Activated T-helper 1 cell treated with anti-CD3 and anti-CD28 coated beads, Interleukin-12 subunit alpha, Interleukin-12 subunit beta, Interleukin-2, Interleukin-4 antibody, amounts not matched to agents 30 ng/mL and 10 ng/mL and 1 ng/mL, durations not matched to agents 14 hours and 24 hours and 36 hours (primary cell): ENCODE measurements at regions of chr3 and their contacts with region 1.

Region 1: DNA sequence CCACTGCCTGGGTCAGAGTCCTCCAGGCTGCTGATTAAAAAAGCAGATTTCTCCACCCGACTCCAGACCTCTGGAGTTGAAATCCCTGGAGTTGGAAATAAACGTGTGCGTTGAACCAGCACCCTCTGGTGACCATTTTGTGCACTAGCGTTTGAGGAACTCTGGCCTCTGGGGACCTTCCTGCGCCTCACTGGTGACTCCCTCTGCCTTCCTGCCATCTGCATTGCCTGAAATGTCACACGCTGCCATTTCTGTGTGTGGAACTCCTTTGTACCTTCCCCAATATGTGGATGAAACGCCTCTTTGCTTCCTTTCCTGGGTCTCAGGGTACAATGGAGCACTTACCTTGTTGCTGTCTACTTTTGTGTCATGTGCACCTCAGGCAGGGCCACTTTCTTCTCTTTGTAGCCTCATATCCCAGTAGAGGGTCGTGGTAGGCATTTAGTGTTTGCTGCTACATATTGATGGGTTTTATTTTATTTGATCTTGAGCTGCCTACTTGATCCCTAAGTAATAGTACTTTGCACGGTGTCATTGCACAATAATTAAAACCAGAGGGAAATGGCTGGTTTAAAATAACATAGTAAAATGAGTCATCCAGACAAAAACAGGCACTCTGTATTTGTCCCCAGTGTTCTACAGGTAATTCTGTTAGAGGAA is 56.8 kb downstream of the GPR171 start:
- DNase-seq: peak; percentile 38
- H3K4me3 Mint-ChIP-seq: no peak overlapping the region
- H3K27ac Mint-ChIP-seq: no peak overlapping the region
- H3K4me1 Mint-ChIP-seq: no peaks in the 10 kb centered on the region
- H3K27me3 Mint-ChIP-seq: peaks cover 14% of the 10 kb centered on the region

Region 2: DNA sequence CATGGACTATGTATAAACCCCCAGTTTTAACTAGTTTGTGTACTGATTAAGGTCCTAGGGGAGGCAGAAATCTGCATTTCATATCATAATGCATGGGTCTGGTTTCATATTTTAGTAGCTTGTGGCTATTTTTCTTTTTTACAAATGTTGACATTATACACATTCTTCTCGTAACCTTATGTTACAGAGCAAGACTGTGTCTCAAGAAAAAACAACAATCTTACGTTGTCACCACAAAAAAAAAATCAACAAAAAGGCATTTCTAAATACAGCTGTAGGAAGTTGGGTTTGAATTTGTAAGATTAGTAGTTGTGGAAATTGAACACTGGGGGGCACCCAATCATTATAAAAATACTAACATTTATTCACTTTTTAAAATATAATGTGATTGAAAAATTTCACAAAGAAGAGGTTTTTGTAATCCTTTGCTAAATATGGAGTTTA is 617.8 kb before region 1 on chr3:
- intact Hi-C with region 1: loop called (anchors 2 kb)
- DNase-seq: no peak
- H3K4me3 Mint-ChIP-seq: no peak overlapping the region
- H3K27ac Mint-ChIP-seq: no peak overlapping the region
- H3K4me1 Mint-ChIP-seq: peaks cover 7% of the 10 kb centered on the region
- H3K27me3 Mint-ChIP-seq: peaks cover 17% of the 10 kb centered on the region

Region 3: GRCh38 chr3:150925751-150926201 is 220.4 kb before region 1 on chr3:
- intact Hi-C with region 1: loop called (anchors 1 kb)
- DNase-seq: peak; percentile 27
- H3K4me3 Mint-ChIP-seq: peak overlapping the region; percentile 48
- H3K27ac Mint-ChIP-seq: no peak overlapping the region
- H3K4me1 Mint-ChIP-seq: peaks cover 9% of the 10 kb centered on the region
- H3K27me3 Mint-ChIP-seq: peaks cover 20% of the 10 kb centered on the region

Region 4: GRCh38 chr3:151067158-151067557 is 79.0 kb before region 1 on chr3:
- intact Hi-C with region 1: loop called (anchors 1 kb)
- DNase-seq: no peak
- H3K4me3 Mint-ChIP-seq: no peak overlapping the region
- H3K27ac Mint-ChIP-seq: no peak overlapping the region
- H3K4me1 Mint-ChIP-seq: no peaks in the 10 kb centered on the region
- H3K27me3 Mint-ChIP-seq: peaks cover 14% of the 10 kb centered on the region